ENCODE measurements at regions of chr5 and their contacts with region 1.

Region 1: GRCh38 chr5:41843456-41844370 is 26.5 kb downstream of the OXCT1 start:
- DNase-seq: no peak
- H3K4me3 Mint-ChIP-seq: no peak overlapping the region
- H3K27ac Mint-ChIP-seq: no peak overlapping the region
- H3K4me1 Mint-ChIP-seq: peaks cover 8% of the 10 kb centered on the region
- H3K27me3 Mint-ChIP-seq: no peaks in the 10 kb centered on the region

Region 2: GRCh38 chr5:41270423-41271251 is 573.1 kb before region 1 on chr5:
- CTCF ChIA-PET with region 1: no interaction called
- POLR2A ChIA-PET with region 1: no interaction called
- intact Hi-C with region 1: loop called (anchors 2 kb)
- DNase-seq: no peak
- H3K4me3 Mint-ChIP-seq: no peak overlapping the region
- H3K27ac Mint-ChIP-seq: no peak overlapping the region
- H3K4me1 Mint-ChIP-seq: peaks cover 2% of the 10 kb centered on the region
- H3K27me3 Mint-ChIP-seq: no peaks in the 10 kb centered on the region

Region 3: DNA sequence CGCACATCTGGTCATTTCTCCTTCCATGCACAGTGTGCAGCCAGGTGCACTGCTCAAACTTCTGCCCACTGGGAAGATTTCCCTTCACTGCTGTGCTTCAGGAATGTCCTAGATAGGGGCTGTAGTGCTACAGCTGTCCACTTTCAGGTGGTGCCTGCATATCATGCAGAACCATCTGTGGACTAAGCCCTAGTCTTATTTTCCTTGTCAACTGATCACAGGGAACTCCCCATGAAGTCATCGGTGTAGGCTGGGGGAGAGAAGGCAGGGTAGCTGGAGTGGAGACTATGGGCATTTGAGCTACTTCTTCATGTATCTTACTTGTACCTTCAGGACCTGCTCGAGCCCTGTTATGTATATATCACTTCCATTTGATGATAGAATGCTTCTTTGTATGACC is 182.5 kb before region 1 on chr5:
- CTCF ChIA-PET with region 1: no interaction called
- POLR2A ChIA-PET with region 1: no interaction called
- intact Hi-C with region 1: no loop called
- DNase-seq: no peak
- H3K4me3 Mint-ChIP-seq: no peak overlapping the region
- H3K27ac Mint-ChIP-seq: no peak overlapping the region
- H3K4me1 Mint-ChIP-seq: no peaks in the 10 kb centered on the region
- H3K27me3 Mint-ChIP-seq: no peaks in the 10 kb centered on the region

Region 4: DNA sequence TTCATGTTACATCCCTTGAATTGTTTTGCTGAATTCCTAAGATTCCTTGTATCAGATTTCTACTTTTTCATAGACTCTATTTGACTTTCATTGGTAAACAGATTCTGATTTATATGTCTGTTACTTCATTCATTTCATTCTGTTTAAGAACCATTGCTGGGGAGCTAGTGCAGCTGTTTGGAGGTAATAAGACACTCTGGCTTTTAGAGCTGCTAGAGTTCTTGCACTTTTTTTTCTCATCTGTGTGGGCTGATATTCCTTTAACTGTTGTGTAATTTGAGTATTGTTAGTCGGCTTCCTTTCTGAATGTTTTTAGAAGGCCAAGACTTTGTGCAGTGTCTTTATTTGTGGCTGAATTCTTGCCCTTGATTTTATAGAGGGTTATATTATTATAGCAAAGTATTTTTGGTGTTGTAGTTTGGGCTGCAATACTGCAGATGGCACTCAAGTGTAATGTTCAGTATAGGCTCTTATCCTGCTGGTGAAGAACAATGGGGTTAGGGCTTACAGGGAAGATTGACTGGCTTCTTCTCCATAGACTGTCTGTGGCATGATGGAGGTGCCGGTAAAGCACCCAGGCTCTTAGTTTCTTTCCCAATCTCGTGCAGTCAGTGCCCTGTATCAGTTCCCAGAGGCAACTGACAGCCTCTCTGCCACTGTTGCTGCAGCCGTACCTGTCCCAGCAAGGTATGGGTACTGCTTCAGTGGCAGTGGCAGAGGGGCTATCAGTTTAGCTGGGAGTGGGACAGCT is 135.7 kb before region 1 on chr5:
- CTCF ChIA-PET with region 1: interaction called, 6 read pairs
- POLR2A ChIA-PET with region 1: no interaction called
- intact Hi-C with region 1: loop called (anchors 1 kb)
- DNase-seq: no peak
- H3K4me3 Mint-ChIP-seq: no peak overlapping the region
- H3K27ac Mint-ChIP-seq: no peak overlapping the region
- H3K4me1 Mint-ChIP-seq: no peaks in the 10 kb centered on the region
- H3K27me3 Mint-ChIP-seq: peaks cover 5% of the 10 kb centered on the region

Region 5: GRCh38 chr5:41809128-41809527 is 34.6 kb before region 1 on chr5:
- CTCF ChIA-PET with region 1: interaction called, 12 read pairs
- POLR2A ChIA-PET with region 1: no interaction called
- intact Hi-C with region 1: no loop called
- DNase-seq: no peak
- H3K4me3 Mint-ChIP-seq: no peak overlapping the region
- H3K27ac Mint-ChIP-seq: no peak overlapping the region
- H3K4me1 Mint-ChIP-seq: peaks cover 35% of the 10 kb centered on the region
- H3K27me3 Mint-ChIP-seq: no peaks in the 10 kb centered on the region

Region 6: GRCh38 chr5:41856644-41857491 is 13.2 kb after region 1 on chr5:
- CTCF ChIA-PET with region 1: interaction called, 34 read pairs
- POLR2A ChIA-PET with region 1: no interaction called
- intact Hi-C with region 1: no loop called
- DNase-seq: peak; percentile 56
- H3K4me3 Mint-ChIP-seq: no peak overlapping the region
- H3K27ac Mint-ChIP-seq: no peak overlapping the region
- H3K4me1 Mint-ChIP-seq: peaks cover 35% of the 10 kb centered on the region
- H3K27me3 Mint-ChIP-seq: no peaks in the 10 kb centered on the region